ENCODE measurements at regions of chr7 and their contacts with region 1.

Region 1: DNA sequence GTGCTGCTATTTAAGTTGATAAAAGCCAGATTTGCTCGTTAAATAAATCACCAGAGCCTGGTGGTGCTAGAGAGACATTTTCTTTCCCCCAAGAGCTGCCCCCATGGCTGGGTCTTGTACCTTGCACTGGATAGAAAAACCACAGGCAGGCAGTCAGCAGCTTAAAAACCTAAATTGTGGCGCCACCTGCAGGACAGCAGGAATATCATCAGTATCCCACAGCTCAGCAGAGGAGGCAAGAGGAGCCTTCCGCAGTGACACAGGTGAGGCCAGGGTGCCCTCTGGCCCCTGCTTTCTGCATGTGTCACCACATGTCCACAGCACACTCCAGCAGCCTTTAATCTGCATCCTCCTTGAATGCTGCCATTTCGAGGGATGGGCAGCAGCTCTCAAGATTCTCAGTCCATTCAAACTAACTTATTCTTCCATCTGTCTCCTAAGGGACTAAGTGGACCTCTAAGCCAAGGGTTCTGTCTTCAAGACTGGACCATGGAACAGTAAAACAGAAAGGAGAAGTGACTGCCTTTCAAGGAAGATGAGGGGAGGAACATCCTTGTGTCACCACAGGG is 4.5 kb upstream of the PLXNA4 start:
- DNase-seq: peak; percentile 39 to 87 (median 65)
- ATAC-seq: peak; percentile 82
- H3K4me3 ChIP-seq: no peak overlapping the region
- H3K4me3 Mint-ChIP-seq: no peak overlapping the region
- H3K27ac ChIP-seq: no peak overlapping the region
- H3K27ac Mint-ChIP-seq: no peak overlapping the region
- H3K4me1 ChIP-seq: peaks cover 11% of the 10 kb centered on the region
- H3K4me1 Mint-ChIP-seq: peaks cover 10% of the 10 kb centered on the region
- H3K27me3 ChIP-seq: peaks cover 3 to 6% of the 10 kb centered on the region in 2 experiments
- H3K27me3 Mint-ChIP-seq: peaks cover 27% of the 10 kb centered on the region
- CTCF ChIP-seq: peak; percentile 87

Region 2: DNA sequence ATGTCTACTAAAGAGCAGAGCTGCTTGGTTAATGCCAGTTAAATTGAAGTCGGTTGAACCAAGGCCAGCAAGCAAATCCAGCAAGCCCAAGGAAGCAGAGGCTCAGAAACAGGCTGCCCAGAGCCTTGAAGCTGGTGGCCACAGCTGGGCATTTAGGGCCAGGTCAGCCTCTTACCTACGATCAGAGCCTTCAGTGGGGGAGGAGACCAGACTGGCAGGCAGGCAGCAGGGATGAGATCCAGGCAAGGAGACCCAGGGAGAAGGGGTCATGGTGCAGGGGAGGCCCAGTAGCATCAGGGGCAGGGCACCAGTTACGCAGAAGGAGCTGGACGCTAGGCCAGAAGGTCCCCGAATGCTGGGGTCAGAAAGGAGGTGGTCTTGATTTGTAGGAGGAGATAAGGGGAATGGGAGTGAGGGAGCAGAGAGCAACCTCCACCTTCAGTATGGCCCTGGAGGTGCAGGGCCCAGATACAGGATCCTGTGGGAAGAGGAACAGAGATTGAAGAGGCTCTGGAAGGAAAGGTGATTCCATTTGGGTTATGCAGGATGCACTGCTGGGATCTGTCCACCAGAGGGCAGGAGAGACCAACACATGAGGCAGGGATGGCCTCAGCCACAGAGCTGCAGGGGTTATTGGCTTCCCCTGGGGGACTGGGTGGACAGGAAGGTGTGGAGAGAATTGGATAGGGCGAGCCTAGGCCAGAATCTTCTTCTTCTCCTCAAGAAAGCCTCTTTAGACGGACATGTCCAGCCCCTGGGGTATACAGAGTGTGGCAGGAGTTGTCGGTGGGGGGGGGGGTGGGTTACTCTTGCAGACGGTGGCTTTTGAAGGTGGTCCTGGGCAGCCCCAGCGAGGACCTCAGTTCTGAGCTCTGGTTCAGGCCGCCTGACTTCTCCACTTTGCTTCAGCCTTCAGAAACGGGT is 891.8 kb before region 1 on chr7:
- CTCF ChIA-PET with region 1: no interaction called
- POLR2A ChIA-PET with region 1: no interaction called
- intact Hi-C with region 1: loop called in 1 of 2 experiments (anchors 2 kb)
- DNase-seq: peak; percentile 14 to 74 (median 53)
- ATAC-seq: peak; percentile 65
- H3K4me3 ChIP-seq: no peak overlapping the region
- H3K4me3 Mint-ChIP-seq: no peak overlapping the region
- H3K27ac ChIP-seq: no peak overlapping the region
- H3K27ac Mint-ChIP-seq: no peak overlapping the region
- H3K4me1 ChIP-seq: no peaks in the 10 kb centered on the region
- H3K4me1 Mint-ChIP-seq: peaks cover 3% of the 10 kb centered on the region
- H3K27me3 ChIP-seq: peaks cover 0 to 5% of the 10 kb centered on the region in 2 experiments
- H3K27me3 Mint-ChIP-seq: peaks cover 38% of the 10 kb centered on the region
- CTCF ChIP-seq: peak; percentile 85

Region 3: GRCh38 chr7:132386201-132386681 is 194.6 kb before region 1 on chr7:
- CTCF ChIA-PET with region 1: interaction called, 247 read pairs
- POLR2A ChIA-PET with region 1: no interaction called
- intact Hi-C with region 1: no loop called
- DNase-seq: no peak
- ATAC-seq: no peak
- H3K4me3 ChIP-seq: no peak overlapping the region
- H3K4me3 Mint-ChIP-seq: no peak overlapping the region
- H3K27ac ChIP-seq: no peak overlapping the region
- H3K27ac Mint-ChIP-seq: no peak overlapping the region
- H3K4me1 ChIP-seq: no peaks in the 10 kb centered on the region
- H3K4me1 Mint-ChIP-seq: no peaks in the 10 kb centered on the region
- H3K27me3 ChIP-seq: peaks cover 0 to 2% of the 10 kb centered on the region in 2 experiments
- H3K27me3 Mint-ChIP-seq: peaks cover 8% of the 10 kb centered on the region
- CTCF ChIP-seq: no peak

Region 4: DNA sequence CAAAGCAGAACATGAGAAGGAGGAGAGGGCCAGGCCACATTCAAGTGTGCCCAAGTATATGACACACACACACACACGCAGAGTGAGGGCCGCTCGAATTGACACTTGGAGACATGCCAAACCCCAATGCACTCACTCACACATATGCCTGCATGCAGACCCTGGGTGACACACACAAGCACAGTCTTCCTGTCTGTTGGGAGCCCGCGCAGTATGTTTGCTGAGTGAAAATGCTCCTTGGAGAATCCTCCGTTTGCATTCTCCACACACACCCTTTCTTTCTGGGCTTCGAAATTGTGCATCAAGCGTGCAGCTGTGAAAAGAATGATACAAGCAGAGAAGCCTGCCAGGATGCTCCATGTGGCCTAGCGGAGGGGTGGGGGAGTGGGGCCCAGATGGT is 125.4 kb before region 1 on chr7:
- CTCF ChIA-PET with region 1: interaction called, 3 read pairs
- POLR2A ChIA-PET with region 1: no interaction called
- intact Hi-C with region 1: loop called in 1 of 2 experiments (anchors 10 kb)
- DNase-seq: peak in 8 of 9 experiments; percentile 21 to 76 (median 58)
- ATAC-seq: peak; percentile 74
- H3K4me3 ChIP-seq: no peak overlapping the region
- H3K4me3 Mint-ChIP-seq: peak overlapping the region; percentile 46
- H3K27ac ChIP-seq: no peak overlapping the region
- H3K27ac Mint-ChIP-seq: peak overlapping the region; percentile 39
- H3K4me1 ChIP-seq: peaks cover 56% of the 10 kb centered on the region
- H3K4me1 Mint-ChIP-seq: peaks cover 55% of the 10 kb centered on the region
- H3K27me3 ChIP-seq: no peaks in the 10 kb centered on the region
- H3K27me3 Mint-ChIP-seq: no peaks in the 10 kb centered on the region
- CTCF ChIP-seq: no peak

Region 5: GRCh38 chr7:132569884-132570614 is 10.8 kb before region 1 on chr7:
- CTCF ChIA-PET with region 1: interaction called, 10 read pairs
- POLR2A ChIA-PET with region 1: no interaction called
- intact Hi-C with region 1: no loop called
- DNase-seq: no peak
- ATAC-seq: no peak
- H3K4me3 ChIP-seq: no peak overlapping the region
- H3K4me3 Mint-ChIP-seq: no peak overlapping the region
- H3K27ac ChIP-seq: no peak overlapping the region
- H3K27ac Mint-ChIP-seq: no peak overlapping the region
- H3K4me1 ChIP-seq: peaks cover 8% of the 10 kb centered on the region
- H3K4me1 Mint-ChIP-seq: peaks cover 11% of the 10 kb centered on the region
- H3K27me3 ChIP-seq: peaks cover 5 to 15% of the 10 kb centered on the region in 2 experiments
- H3K27me3 Mint-ChIP-seq: peaks cover 71% of the 10 kb centered on the region
- CTCF ChIP-seq: no peak